Ascending aorta (tissue), 2 donors: ENCODE measurements at regions of chr5 and their contacts with region 1.

Region 1: DNA sequence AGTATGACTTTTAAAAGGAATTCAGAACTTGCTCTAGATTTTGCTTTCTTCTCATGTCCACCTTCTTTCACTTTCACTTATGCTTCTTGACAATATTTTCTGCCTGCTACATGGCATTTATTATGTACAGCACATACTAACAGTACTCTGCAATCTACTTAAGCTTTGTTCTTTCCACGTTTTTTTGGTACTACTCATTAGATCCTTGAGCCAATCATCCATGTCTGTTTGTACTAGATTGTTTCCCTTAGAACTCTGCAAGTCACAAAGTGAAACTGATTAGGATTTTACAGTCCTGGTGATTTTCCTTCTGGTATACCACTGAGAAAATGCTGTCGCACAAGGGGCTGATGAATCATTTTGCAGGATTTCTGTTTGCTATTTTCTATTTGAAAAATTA is 78.3 kb downstream of the PARP8 start:
- DNase-seq: no peak
- H3K4me3 ChIP-seq: peak overlapping the region; percentile 36 to 56
- H3K27ac ChIP-seq: peak overlapping the region; percentile 56
- H3K4me1 ChIP-seq: peaks cover 0 to 6% of the 10 kb centered on the region in 2 donors
- H3K27me3 ChIP-seq: no peaks in the 10 kb centered on the region
- CTCF ChIP-seq: no peak

Region 2: GRCh38 chr5:50667653-50668595 is 76.9 kb before region 1 on chr5:
- intact Hi-C with region 1: loop called (anchors 5 kb)
- DNase-seq: peak in 1 of 2 donors; percentile 78
- H3K4me3 ChIP-seq: peak overlapping the region; percentile 97 to 99
- H3K27ac ChIP-seq: peak overlapping the region; percentile 92 to 95
- H3K4me1 ChIP-seq: peaks cover 0 to 21% of the 10 kb centered on the region in 2 donors
- H3K27me3 ChIP-seq: no peaks in the 10 kb centered on the region
- CTCF ChIP-seq: no peak